ENCODE measurements at regions of chrX and their contacts with region 1.

Region 1: DNA sequence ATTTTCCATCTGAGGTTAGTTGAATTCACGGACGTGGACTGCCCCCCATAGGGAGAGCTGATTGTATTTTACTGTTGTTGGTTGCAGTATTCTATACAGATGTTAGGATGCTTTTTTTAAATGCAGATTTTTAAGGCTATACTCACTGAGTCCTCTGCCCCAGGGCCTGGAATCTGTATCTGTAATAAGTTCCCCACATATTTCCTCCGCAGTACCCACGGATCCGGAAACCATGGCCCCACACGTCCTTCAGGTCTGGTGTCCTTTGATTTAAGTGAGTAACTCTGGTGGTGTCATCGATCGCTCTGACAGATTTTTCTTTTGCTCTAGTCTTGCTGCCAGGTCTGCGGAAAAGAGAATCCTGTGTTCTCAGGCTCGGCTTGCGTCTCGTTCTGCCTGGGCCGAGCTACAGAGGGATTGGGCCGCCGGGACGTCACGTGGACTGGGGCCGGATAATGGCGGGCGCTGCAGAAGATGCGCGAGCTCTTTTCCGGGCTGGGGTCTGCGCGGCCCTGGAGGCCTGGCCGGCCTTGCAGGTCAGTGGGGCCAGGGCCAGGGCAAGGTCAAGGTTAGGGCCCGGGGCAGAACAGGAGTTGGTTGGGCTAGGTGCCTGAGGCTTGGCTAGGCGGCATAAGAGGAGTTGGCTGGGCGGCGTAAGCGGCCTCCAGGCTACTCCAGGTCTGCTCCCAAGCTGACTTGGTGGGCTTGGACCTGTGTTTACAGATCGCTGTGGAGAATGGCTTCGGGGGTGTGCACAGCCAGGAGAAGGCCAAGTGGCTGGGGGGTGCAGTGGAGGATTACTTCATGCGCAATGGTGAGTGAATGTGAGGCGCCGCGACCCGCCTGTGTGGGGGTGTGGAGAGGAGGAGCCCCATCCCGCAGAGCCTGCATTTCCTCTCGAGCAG is at the start of gene TSR2:
- DNase-seq: peak; percentile 67 to 76 (median 73)
- H3K4me3 ChIP-seq: peak within 1 kb of the TSS; percentile 84 to 94 (median 88)
- H3K4me3 Mint-ChIP-seq: peak within 1 kb of the TSS; percentile 88 to 96
- H3K27ac ChIP-seq: peak within 1 kb of the TSS in 1 of 2 donors; percentile 75
- H3K27ac Mint-ChIP-seq: peak within 1 kb of the TSS; percentile 16 to 90 (median 82)
- H3K4me1 ChIP-seq: peaks cover 12 to 17% of the 10 kb centered on the region in 2 donors
- H3K4me1 Mint-ChIP-seq: peaks cover 14% of the 10 kb centered on the region
- H3K27me3 ChIP-seq: no peaks in the 10 kb centered on the region
- H3K27me3 Mint-ChIP-seq: peaks cover 6 to 11% (median 6%) of the 10 kb centered on the region in 3 donors
- CTCF ChIP-seq: no peak
- polyA plus RNA-seq, gene TSR2: 11.8 to 18.0 (median 13.0) TPM

Region 2: DNA sequence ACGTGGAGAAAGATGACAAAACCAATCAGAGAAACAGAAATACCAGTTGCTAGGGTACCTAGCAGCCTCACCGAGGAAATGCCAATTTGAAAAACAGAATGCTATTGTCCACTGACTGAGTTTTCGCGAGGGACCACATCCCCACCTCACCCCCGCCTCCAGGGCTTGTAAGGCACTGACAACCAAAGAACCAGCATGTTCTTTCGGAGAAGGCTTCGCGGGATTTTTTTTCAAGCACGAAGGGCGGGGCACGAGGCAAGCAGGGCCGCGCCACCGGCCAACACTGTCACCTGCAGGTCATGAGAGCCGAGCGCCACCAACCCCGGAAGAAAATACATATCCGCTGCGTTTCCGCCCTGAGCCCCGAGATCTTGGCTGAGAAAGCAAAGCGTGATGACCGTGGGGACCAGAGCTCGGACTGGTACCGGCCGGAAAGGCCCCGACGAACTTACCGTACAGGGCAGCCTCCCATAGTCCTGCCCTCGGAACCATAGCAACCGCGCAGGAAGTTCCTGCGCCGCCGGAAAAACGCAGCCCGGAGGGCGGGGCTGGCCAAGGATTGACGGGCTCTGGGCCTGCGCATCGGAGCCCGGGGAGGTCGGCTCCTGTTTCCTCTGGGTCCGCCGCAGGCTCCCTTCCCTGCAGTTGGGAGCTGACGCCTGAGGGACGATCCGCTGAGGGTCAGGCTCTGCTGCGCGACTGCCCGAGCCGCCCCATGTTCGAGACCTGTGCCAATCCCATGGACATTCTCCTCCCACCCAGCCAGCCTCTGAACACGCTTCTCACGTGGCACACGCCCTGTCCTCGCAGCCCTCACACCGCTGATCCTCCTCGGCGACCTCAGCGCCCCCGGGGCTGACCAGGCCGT is 720.7 kb after region 1 on chrX:
- intact Hi-C with region 1: loop called in 1 of 2 experiments (anchors 5 kb)
- DNase-seq: peak; percentile 73 to 78 (median 78)
- H3K4me3 ChIP-seq: peak overlapping the region; percentile 34 to 76 (median 60)
- H3K4me3 Mint-ChIP-seq: peak overlapping the region; percentile 86 to 93
- H3K27ac ChIP-seq: peak overlapping the region; percentile 80 to 81
- H3K27ac Mint-ChIP-seq: peak overlapping the region; percentile 91 to 98 (median 95)
- H3K4me1 ChIP-seq: peaks cover 12 to 14% of the 10 kb centered on the region in 2 donors
- H3K4me1 Mint-ChIP-seq: peaks cover 12% of the 10 kb centered on the region
- H3K27me3 ChIP-seq: no peaks in the 10 kb centered on the region
- H3K27me3 Mint-ChIP-seq: peaks cover 6 to 12% (median 7%) of the 10 kb centered on the region in 3 donors
- CTCF ChIP-seq: peak; percentile 65